ENCODE measurements at regions of chr17 and their contacts with region 1.

Region 1: GRCh38 chr17:66364990-66365490 is 62.6 kb downstream of the PRKCA start:
- DNase-seq: no peak
- H3K4me3 Mint-ChIP-seq: peak overlapping the region; percentile 35
- H3K27ac Mint-ChIP-seq: peak overlapping the region; percentile 77
- H3K4me1 Mint-ChIP-seq: peaks cover 86% of the 10 kb centered on the region
- H3K27me3 Mint-ChIP-seq: no peaks in the 10 kb centered on the region

Region 2: DNA sequence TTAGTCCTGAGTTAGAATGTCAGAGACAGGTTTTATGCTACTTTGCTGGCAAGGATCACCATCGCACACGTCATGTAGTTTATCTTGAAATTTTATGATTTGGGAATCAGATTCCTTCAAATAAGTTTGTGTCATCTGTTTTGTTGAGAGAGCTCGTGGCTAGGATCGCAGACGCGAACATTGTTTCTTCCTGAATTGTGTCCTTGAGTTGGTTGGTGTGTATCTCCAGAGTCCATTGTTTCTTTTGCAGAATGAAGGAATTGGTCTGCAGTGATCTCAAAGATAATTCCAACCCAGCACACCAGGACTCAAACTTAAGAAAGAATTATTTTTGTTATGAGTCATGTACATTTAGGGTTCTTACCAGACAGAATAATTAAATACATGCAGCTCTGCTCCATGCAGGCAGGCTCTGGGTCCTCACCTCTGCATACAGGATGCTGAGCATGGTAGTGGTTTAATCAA is 11.1 kb before region 1 on chr17:
- CTCF ChIA-PET with region 1: interaction called, 3 read pairs
- POLR2A ChIA-PET with region 1: no interaction called
- intact Hi-C with region 1: loop called (anchors 1 kb)
- DNase-seq: no peak
- H3K4me3 Mint-ChIP-seq: no peak overlapping the region
- H3K27ac Mint-ChIP-seq: no peak overlapping the region
- H3K4me1 Mint-ChIP-seq: peaks cover 84% of the 10 kb centered on the region
- H3K27me3 Mint-ChIP-seq: no peaks in the 10 kb centered on the region

Measured in activated CD4-positive, alpha-beta memory T cell treated with anti-CD3 and anti-CD28 coated beads for 36 hours (primary cell).